HepG2 (cell line): ENCODE measurements at regions of chr5 and their contacts with region 1.

Region 1: DNA sequence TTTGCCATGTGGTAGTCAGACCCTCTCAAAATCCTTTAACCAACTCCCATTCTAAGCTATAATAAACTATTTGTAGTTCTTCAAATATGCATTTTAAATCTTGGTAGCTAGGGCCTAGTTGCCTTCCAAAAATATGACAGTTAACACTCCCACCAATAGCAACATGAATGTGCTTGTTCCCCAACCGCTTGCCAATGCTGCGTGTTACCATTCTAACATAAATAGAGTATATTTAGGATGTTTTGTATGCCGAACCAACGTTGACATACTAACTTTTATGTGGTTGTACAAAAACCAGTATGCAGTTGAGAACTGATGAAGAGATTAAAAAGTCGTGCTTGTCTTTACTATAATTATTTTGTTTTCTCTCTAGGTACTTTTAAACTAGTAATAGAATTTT is 9.0 kb downstream of the UBE2B start:
- DNase-seq: no peak
- ATAC-seq: no peak
- H3K4me3 ChIP-seq: no peak overlapping the region
- H3K27ac ChIP-seq: no peak overlapping the region
- H3K4me1 ChIP-seq: no peaks in the 10 kb centered on the region
- H3K27me3 ChIP-seq: no peaks in the 10 kb centered on the region
- CTCF ChIP-seq: no peak
- EP300 ChIP-seq: no peak
- POLR2A ChIP-seq: no peak
- RAD21 ChIP-seq: no peak

Region 2: DNA sequence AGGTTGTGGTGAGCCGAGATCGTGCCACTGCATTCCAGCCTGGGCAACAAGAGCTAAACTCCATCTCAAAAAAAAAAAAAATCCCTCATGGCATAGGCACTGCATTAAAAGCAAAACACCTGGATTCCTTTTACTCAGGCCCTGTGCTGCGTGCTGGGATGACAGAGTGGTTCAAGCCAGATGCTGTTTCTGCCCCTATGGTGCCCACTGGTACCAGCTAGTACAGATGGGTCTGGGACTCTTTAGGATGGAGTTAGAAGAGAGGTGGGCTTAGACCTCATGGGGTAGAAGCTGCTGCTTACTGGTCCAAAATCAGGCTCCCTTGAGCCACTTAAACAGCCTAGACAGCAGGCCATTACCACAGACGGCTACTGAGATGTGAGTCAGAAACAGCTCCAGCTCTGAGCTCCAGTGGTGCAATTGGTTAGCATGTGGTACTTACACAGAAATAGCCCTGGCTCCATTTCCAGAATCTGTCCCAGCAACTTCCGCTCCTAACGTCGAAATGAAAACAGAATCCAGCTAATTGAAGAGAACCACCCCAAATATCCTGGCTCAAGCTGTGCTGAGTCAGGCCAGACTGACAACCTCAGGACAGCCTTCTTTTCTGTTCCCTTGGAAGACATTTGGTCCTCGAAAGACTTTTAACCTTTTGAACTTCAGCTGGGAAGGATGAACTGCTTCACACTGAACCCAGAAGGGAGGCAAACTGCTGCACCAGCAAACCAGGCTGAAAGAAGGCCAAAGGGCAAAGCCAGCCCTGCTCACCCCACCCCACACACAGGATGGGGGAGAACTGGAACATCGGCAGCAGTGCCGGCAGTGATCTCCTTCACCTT is 427.4 kb before region 1 on chr5:
- CTCF ChIA-PET with region 1: no interaction called
- POLR2A ChIA-PET with region 1: no interaction called
- in situ Hi-C with region 1: no loop called
- intact Hi-C with region 1: no loop called
- DNase-seq: no peak
- ATAC-seq: peak; percentile 77
- H3K4me3 ChIP-seq: 0 out of 6 replicates have a peak overlapping the region, but pooled peaks of 1 of the 3 experiments have one; percentile 1
- H3K27ac ChIP-seq: no peak overlapping the region
- H3K4me1 ChIP-seq: peaks cover 11% of the 10 kb centered on the region
- H3K27me3 ChIP-seq: no peaks in the 10 kb centered on the region
- CTCF ChIP-seq: no peak
- EP300 ChIP-seq: no peak
- POLR2A ChIP-seq: no peak
- RAD21 ChIP-seq: no peak

Region 3: GRCh38 chr5:134184155-134185135 is 195.9 kb before region 1 on chr5:
- CTCF ChIA-PET with region 1: no interaction called
- POLR2A ChIA-PET with region 1: no interaction called
- in situ Hi-C with region 1: no loop called
- intact Hi-C with region 1: loop called (anchors 10 kb)
- DNase-seq: peak; percentile 62
- ATAC-seq: peak; percentile 87
- H3K4me3 ChIP-seq: no peak overlapping the region
- H3K27ac ChIP-seq: no peak overlapping the region
- H3K4me1 ChIP-seq: peaks cover 30% of the 10 kb centered on the region
- H3K27me3 ChIP-seq: no peaks in the 10 kb centered on the region
- CTCF ChIP-seq: peak; percentile 97
- EP300 ChIP-seq: no peak
- POLR2A ChIP-seq: no peak
- RAD21 ChIP-seq: peak; percentile 88

Region 4: DNA sequence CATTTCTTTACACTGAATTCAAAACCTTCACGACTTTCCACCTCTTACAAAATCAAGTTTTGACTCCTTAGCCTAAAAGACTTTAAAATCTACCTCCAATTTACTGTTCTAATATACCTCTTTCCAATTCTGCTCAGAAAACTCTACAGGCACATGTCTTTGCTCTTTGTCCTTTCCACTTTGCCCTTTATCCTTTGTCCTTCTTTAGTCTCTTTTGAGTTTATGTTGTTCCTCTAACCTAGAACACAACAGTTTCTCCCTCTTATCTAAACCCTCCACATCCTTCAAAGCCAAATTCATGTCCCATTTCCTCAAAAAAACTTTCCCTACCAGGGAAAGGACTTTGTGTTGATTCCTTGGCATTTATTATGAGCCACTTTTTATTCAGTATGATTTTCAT is 14.7 kb before region 1 on chr5:
- CTCF ChIA-PET with region 1: no interaction called
- POLR2A ChIA-PET with region 1: no interaction called
- in situ Hi-C with region 1: no loop called
- intact Hi-C with region 1: no loop called
- DNase-seq: no peak
- ATAC-seq: no peak
- H3K4me3 ChIP-seq: no peak overlapping the region
- H3K27ac ChIP-seq: no peak overlapping the region
- H3K4me1 ChIP-seq: peaks cover 34% of the 10 kb centered on the region
- H3K27me3 ChIP-seq: no peaks in the 10 kb centered on the region; a peak in 1 of 5 replicates
- CTCF ChIP-seq: no peak
- EP300 ChIP-seq: no peak
- POLR2A ChIP-seq: no peak
- RAD21 ChIP-seq: no peak

Region 5: GRCh38 chr5:134511788-134512650 is 131.7 kb after region 1 on chr5:
- CTCF ChIA-PET with region 1: no interaction called
- POLR2A ChIA-PET with region 1: no interaction called
- in situ Hi-C with region 1: no loop called
- intact Hi-C with region 1: no loop called
- DNase-seq: peak; percentile 74
- ATAC-seq: peak; percentile 84
- H3K4me3 ChIP-seq: peak overlapping the region; percentile 12 to 60 (median 24); a peak in 5 of 6 replicates
- H3K27ac ChIP-seq: peak overlapping the region; percentile 71
- H3K4me1 ChIP-seq: peaks cover 73% of the 10 kb centered on the region
- H3K27me3 ChIP-seq: no peaks in the 10 kb centered on the region
- CTCF ChIP-seq: peak; percentile 77
- EP300 ChIP-seq: peak in 1 of 2 experiments; percentile 40; a peak in 1 of 4 replicates
- POLR2A ChIP-seq: peak in 1 of 2 experiments; percentile 61; a peak in 1 of 4 replicates
- RAD21 ChIP-seq: peak; percentile 57; the same call in 1 of the 2 replicates